Natural killer cell (primary cell): ENCODE measurements at regions of chr12 and their contacts with region 1.

Region 1: GRCh38 chr12:47705566-47706425 is at the start of gene RPAP3:
- DNase-seq: peak; percentile 97 to 98
- ATAC-seq: peak; percentile 90 to 98 (median 92)
- H3K4me3 ChIP-seq: peak within 1 kb of the TSS; percentile 80
- H3K4me3 Mint-ChIP-seq: peak within 1 kb of the TSS; percentile 99
- H3K27ac ChIP-seq: peak within 1 kb of the TSS; percentile 84
- H3K27ac Mint-ChIP-seq: peak within 1 kb of the TSS; percentile 96 to 98
- H3K4me1 ChIP-seq: peaks cover 27% of the 10 kb centered on the region
- H3K4me1 Mint-ChIP-seq: peaks cover 52 to 60% of the 10 kb centered on the region in 2 donors
- H3K27me3 ChIP-seq: no peaks in the 10 kb centered on the region
- H3K27me3 Mint-ChIP-seq: no peaks in the 10 kb centered on the region
- CTCF ChIP-seq: peak; percentile 51
- total RNA-seq, gene RPAP3: 22.8 to 35.8 (median 24.8) TPM

Region 2: GRCh38 chr12:45990468-45991283 is 1715.1 kb before region 1 on chr12 and contains the start of gene SCAF11:
- intact Hi-C with region 1: loop called (anchors 5 kb)
- DNase-seq: peak; percentile 100
- ATAC-seq: peak; percentile 83 to 96 (median 85)
- H3K4me3 ChIP-seq: peak within 1 kb of the TSS; percentile 69
- H3K4me3 Mint-ChIP-seq: peak within 1 kb of the TSS; percentile 96
- H3K27ac ChIP-seq: peak within 1 kb of the TSS; percentile 89
- H3K27ac Mint-ChIP-seq: peak within 1 kb of the TSS; percentile 98
- H3K4me1 ChIP-seq: peaks cover 12% of the 10 kb centered on the region
- H3K4me1 Mint-ChIP-seq: peaks cover 49 to 52% of the 10 kb centered on the region in 2 donors
- H3K27me3 ChIP-seq: no peaks in the 10 kb centered on the region
- H3K27me3 Mint-ChIP-seq: peaks cover 0 to 2% of the 10 kb centered on the region in 2 donors
- CTCF ChIP-seq: peak; percentile 78
- total RNA-seq, gene SCAF11: 208 to 232 (median 220) TPM

Region 3: DNA sequence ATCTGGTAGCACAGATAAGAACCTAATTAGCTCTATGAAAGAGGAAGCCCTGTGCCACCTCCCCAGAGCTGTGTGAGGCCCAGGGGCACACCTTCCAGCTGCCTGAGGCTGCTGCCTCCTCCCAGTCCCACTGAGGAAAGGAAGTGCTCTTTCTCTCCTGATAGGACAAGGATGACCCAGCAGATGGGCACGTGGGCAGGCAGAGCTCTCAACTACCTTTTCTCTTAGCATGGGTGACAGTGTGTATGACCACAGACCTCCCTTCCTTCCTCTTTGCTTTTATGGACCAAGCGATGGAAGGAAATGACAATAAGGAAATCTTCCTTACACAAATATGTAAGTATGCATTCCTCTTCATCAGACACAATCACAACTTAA is 498.5 kb before region 1 on chr12:
- intact Hi-C with region 1: loop called (anchors 5 kb)
- DNase-seq: peak; percentile 35 to 68
- ATAC-seq: peak; percentile 58 to 78 (median 63)
- H3K4me3 ChIP-seq: no peak overlapping the region
- H3K4me3 Mint-ChIP-seq: peak overlapping the region; percentile 63
- H3K27ac ChIP-seq: peak overlapping the region; percentile 82
- H3K27ac Mint-ChIP-seq: peak overlapping the region; percentile 97 to 99
- H3K4me1 ChIP-seq: peaks cover 60% of the 10 kb centered on the region
- H3K4me1 Mint-ChIP-seq: peaks cover 70 to 78% of the 10 kb centered on the region in 2 donors
- H3K27me3 ChIP-seq: no peaks in the 10 kb centered on the region
- H3K27me3 Mint-ChIP-seq: no peaks in the 10 kb centered on the region
- CTCF ChIP-seq: no peak

Region 4: GRCh38 chr12:47634127-47634526 is 71.7 kb before region 1 on chr12:
- intact Hi-C with region 1: no loop called
- DNase-seq: peak in 1 of 2 donors; percentile 9
- ATAC-seq: peak; percentile 43 to 73 (median 62)
- H3K4me3 ChIP-seq: no peak overlapping the region
- H3K4me3 Mint-ChIP-seq: no peak overlapping the region
- H3K27ac ChIP-seq: no peak overlapping the region
- H3K27ac Mint-ChIP-seq: no peak overlapping the region
- H3K4me1 ChIP-seq: no peaks in the 10 kb centered on the region
- H3K4me1 Mint-ChIP-seq: peaks cover 5 to 6% of the 10 kb centered on the region in 2 donors
- H3K27me3 ChIP-seq: no peaks in the 10 kb centered on the region
- H3K27me3 Mint-ChIP-seq: no peaks in the 10 kb centered on the region
- CTCF ChIP-seq: no peak

Region 5: DNA sequence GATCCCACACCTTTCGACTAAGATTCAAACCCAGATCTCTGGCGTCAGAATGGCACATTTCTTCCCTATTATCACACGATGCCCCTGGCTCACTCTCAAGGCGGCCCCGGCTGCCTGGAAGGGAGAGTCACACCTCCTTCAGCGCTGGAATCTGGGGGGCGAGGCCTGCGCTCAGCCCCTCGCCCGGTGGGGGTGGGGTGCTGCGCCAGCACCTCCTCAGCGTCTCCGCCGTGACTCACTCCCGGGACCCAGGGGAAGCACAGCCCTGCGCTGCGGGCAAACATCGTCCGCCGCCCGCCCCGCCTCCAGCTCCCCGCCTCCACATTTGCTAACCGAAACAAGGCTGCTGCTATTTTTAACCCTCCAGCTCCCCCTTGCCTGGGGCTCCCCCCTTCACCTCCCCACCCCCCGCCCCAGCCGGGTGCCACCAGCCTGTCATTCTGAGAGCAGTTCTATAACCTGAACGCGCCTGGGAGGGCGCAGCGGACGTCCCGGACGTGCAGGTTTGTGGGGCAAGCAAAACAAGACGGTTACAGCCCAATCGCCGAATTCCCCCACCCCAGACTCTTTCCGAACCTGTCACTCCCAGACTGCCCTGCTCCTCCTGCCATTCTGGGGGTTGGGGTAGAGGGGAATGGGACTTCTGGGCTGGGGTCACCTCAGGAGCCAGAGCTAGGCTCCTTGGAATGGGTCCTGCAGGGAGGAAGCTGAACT is 107.2 kb after region 1 on chr12:
- intact Hi-C with region 1: loop called (anchors 2 kb)
- DNase-seq: peak; percentile 82 to 94
- ATAC-seq: peak; percentile 60 to 81 (median 72)
- H3K4me3 ChIP-seq: peak overlapping the region; percentile 42
- H3K4me3 Mint-ChIP-seq: peak overlapping the region; percentile 88
- H3K27ac ChIP-seq: peak overlapping the region; percentile 87
- H3K27ac Mint-ChIP-seq: peak overlapping the region; percentile 91 to 92
- H3K4me1 ChIP-seq: peaks cover 98% of the 10 kb centered on the region
- H3K4me1 Mint-ChIP-seq: peaks cover 85 to 94% of the 10 kb centered on the region in 2 donors
- H3K27me3 ChIP-seq: no peaks in the 10 kb centered on the region
- H3K27me3 Mint-ChIP-seq: no peaks in the 10 kb centered on the region
- CTCF ChIP-seq: no peak

Region 6: GRCh38 chr12:48716493-48717251 is 1010.9 kb after region 1 on chr12 and contains the start of gene CCNT1:
- intact Hi-C with region 1: loop called (anchors 5 kb)
- DNase-seq: peak; percentile 97 to 100
- ATAC-seq: peak; percentile 87 to 95 (median 88)
- H3K4me3 ChIP-seq: peak within 1 kb of the TSS; percentile 69
- H3K4me3 Mint-ChIP-seq: peak within 1 kb of the TSS; percentile 95
- H3K27ac ChIP-seq: peak within 1 kb of the TSS; percentile 93
- H3K27ac Mint-ChIP-seq: peak within 1 kb of the TSS; percentile 94 to 99
- H3K4me1 ChIP-seq: peaks cover 29% of the 10 kb centered on the region
- H3K4me1 Mint-ChIP-seq: peaks cover 38 to 40% of the 10 kb centered on the region in 2 donors
- H3K27me3 ChIP-seq: no peaks in the 10 kb centered on the region
- H3K27me3 Mint-ChIP-seq: peaks cover 0 to 5% of the 10 kb centered on the region in 2 donors
- CTCF ChIP-seq: peak; percentile 12
- total RNA-seq, gene CCNT1: 119 to 145 (median 120) TPM